Right ventricle myocardium inferior (tissue), 1 donor: ENCODE measurements at regions of chr18 and their contacts with region 1.

Region 1: DNA sequence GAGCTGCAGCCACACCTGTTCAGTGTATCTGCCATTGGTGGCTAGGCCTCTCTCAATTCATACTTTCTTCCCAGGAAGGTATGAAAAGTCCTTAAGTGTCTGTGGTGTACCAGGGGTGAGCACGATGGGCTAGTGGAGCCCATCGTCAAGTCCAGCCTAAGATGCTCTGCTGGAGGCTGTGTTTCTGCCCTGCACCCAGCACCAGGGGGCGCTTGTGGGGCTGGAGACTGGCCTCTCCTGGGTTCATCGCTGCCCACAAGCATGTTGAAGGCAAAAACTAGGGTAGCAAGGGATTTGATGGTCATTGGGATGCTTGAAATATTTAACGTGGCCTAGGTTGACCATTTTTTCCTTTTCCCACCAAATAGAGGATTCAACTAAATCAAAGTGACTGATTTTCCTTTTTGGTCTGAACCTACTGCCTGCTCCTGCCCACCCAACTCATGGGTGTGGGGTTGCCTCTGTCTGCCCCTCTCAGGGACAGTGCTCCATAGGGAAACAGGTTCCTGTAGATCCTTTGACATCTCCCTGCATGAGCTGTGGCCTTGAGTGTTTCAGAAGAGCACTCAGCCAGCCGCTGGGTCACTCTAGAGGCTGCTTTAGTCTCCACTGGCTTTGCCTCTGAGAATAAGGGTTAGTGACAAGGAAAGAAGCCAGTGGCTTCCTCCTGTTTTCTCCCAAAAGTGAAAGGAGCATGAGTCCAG is 59.0 kb downstream of the TPGS2 start:
- DNase-seq: no peak
- ATAC-seq: no peak

Region 2: GRCh38 chr18:36809590-36810381 is 40.0 kb after region 1 on chr18:
- intact Hi-C with region 1: loop called (anchors 2 kb)
- DNase-seq: no peak
- ATAC-seq: peak; percentile 73